ENCODE measurements at regions of chr7 and their contacts with region 1.

Region 1: DNA sequence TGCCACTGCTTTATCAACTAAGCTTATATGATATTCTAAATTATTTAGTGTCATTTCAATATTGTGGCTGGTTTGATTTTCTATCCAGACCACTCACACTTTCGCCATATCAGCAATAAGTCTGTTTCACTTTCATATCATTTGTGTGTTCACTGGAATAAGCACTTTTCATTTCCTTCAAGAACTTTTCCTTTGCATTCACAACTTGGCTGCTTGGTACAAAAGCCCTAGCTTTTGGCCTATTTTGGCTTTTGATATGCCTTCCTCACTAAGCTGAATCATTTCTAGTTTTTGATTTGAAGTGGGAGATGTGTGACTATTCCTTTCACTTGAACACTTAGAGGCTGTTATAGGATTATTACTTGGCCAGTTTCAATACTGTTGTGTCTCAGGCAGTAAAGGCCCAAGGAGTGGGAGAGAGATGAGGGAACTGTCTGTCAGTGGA is 120.9 kb upstream of the NAMPT start:
- DNase-seq: peak; percentile 48
- H3K4me3 Mint-ChIP-seq: peak overlapping the region; percentile 1
- H3K27ac Mint-ChIP-seq: peak overlapping the region; percentile 19
- H3K4me1 Mint-ChIP-seq: peaks cover 31% of the 10 kb centered on the region
- H3K27me3 Mint-ChIP-seq: peaks cover 10% of the 10 kb centered on the region

Region 2: GRCh38 chr7:106260136-106260561 is 145.6 kb before region 1 on chr7:
- CTCF ChIA-PET with region 1: no interaction called
- POLR2A ChIA-PET with region 1: no interaction called
- intact Hi-C with region 1: loop called (anchors 1 kb)
- DNase-seq: no peak
- H3K4me3 Mint-ChIP-seq: no peak overlapping the region
- H3K27ac Mint-ChIP-seq: peak overlapping the region; percentile 78
- H3K4me1 Mint-ChIP-seq: peaks cover 75% of the 10 kb centered on the region
- H3K27me3 Mint-ChIP-seq: no peaks in the 10 kb centered on the region

Region 3: DNA sequence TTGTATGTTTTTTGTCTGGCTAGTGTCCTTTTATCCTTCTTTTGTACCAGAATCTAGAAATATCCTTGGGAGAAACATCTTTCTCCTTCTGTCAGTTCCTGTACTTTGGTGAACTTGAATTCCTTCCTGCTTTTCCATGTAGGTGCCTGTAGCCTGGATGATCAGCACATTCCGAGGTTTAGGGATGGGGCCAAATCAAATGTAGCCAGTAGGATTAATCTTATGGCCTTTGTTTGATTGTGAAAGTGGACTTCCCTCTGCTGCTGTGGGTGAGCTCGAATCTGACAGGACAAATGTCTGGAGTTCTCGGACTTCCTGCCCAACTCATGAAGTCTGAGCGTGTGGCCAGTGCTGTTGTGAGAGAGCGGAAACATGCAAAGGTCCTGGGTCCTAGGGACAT is 87.7 kb before region 1 on chr7:
- CTCF ChIA-PET with region 1: no interaction called
- POLR2A ChIA-PET with region 1: no interaction called
- intact Hi-C with region 1: no loop called
- DNase-seq: no peak
- H3K4me3 Mint-ChIP-seq: no peak overlapping the region
- H3K27ac Mint-ChIP-seq: no peak overlapping the region
- H3K4me1 Mint-ChIP-seq: peaks cover 14% of the 10 kb centered on the region
- H3K27me3 Mint-ChIP-seq: peaks cover 26% of the 10 kb centered on the region

Region 4: DNA sequence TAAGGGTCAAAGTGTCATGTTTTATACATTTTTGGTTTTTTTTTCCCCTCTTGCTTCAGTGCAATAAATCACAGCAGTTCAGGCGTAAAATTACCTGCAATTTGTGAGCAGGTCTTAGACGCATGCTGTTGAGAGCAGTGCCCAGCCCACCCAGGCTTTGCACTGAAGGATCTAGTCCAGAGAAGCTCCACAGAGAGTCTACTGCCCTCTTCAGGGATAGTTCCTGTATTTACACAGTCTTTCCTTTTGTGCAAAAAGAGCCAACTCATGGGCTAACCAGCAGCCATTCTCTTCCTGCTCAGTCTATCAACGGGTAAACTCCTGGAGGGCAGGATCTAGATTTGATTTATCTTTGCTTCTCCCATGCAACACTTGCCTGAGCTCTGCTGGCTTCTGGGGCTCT is 38.7 kb before region 1 on chr7:
- CTCF ChIA-PET with region 1: interaction called, 5 read pairs
- POLR2A ChIA-PET with region 1: interaction called, 3 read pairs
- intact Hi-C with region 1: loop called (anchors 1 kb)
- DNase-seq: peak; percentile 9
- H3K4me3 Mint-ChIP-seq: no peak overlapping the region
- H3K27ac Mint-ChIP-seq: peak overlapping the region; percentile 64
- H3K4me1 Mint-ChIP-seq: peaks cover 45% of the 10 kb centered on the region
- H3K27me3 Mint-ChIP-seq: peaks cover 18% of the 10 kb centered on the region

Region 5: DNA sequence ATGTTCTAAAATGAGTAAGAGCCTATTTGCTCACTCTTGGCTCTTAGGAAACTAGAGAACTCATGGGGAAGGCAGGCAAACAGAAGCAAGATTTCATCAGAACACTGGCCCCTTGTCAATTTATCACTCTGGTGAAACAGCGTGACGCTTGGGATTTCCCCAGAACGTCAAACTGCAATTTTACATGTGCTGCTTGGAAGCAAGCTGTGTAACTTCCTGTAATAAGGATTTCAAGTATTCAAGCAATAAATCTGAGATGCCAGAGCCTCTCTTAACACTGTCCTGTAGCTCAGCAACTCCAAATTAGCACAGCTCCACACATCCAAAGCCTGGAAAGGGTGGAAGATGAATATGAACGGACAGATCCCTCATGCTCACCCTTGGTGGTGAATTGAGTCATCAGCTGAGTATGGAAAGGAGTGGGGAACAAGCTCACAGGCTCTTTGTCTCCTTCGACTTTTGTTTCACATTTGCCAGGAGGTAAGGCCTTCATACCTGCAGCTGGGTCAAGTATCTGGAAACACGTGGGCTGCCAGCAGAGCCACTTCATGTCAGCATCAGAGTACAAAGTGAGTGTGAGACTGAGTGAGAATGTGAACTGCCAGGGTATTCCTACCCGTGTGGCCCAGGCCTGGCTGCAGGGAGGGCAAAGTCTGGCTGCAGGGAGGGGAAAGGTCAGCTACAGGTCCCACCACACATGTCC is 19.4 kb after region 1 on chr7:
- CTCF ChIA-PET with region 1: interaction called, 3 read pairs
- POLR2A ChIA-PET with region 1: interaction called, 11 read pairs
- intact Hi-C with region 1: loop called (anchors 1 kb)
- DNase-seq: peak; percentile 91
- H3K4me3 Mint-ChIP-seq: peak overlapping the region; percentile 65
- H3K27ac Mint-ChIP-seq: peak overlapping the region; percentile 97
- H3K4me1 Mint-ChIP-seq: peaks cover 81% of the 10 kb centered on the region
- H3K27me3 Mint-ChIP-seq: no peaks in the 10 kb centered on the region

Region 6: GRCh38 chr7:106485031-106485551 is 79.4 kb after region 1 on chr7:
- CTCF ChIA-PET with region 1: no interaction called
- POLR2A ChIA-PET with region 1: interaction called, 3 read pairs
- intact Hi-C with region 1: loop called (anchors 1 kb)
- DNase-seq: peak; percentile 22
- H3K4me3 Mint-ChIP-seq: no peak overlapping the region
- H3K27ac Mint-ChIP-seq: peak overlapping the region; percentile 78
- H3K4me1 Mint-ChIP-seq: peaks cover 58% of the 10 kb centered on the region
- H3K27me3 Mint-ChIP-seq: peaks cover 18% of the 10 kb centered on the region

Region 7: GRCh38 chr7:106793015-106793975 is 387.6 kb after region 1 on chr7:
- CTCF ChIA-PET with region 1: no interaction called
- POLR2A ChIA-PET with region 1: no interaction called
- intact Hi-C with region 1: no loop called
- DNase-seq: no peak
- H3K4me3 Mint-ChIP-seq: no peak overlapping the region
- H3K27ac Mint-ChIP-seq: no peak overlapping the region
- H3K4me1 Mint-ChIP-seq: no peaks in the 10 kb centered on the region
- H3K27me3 Mint-ChIP-seq: peaks cover 4% of the 10 kb centered on the region